ENCODE measurements at regions of chr7 and their contacts with region 1.

Region 1: DNA sequence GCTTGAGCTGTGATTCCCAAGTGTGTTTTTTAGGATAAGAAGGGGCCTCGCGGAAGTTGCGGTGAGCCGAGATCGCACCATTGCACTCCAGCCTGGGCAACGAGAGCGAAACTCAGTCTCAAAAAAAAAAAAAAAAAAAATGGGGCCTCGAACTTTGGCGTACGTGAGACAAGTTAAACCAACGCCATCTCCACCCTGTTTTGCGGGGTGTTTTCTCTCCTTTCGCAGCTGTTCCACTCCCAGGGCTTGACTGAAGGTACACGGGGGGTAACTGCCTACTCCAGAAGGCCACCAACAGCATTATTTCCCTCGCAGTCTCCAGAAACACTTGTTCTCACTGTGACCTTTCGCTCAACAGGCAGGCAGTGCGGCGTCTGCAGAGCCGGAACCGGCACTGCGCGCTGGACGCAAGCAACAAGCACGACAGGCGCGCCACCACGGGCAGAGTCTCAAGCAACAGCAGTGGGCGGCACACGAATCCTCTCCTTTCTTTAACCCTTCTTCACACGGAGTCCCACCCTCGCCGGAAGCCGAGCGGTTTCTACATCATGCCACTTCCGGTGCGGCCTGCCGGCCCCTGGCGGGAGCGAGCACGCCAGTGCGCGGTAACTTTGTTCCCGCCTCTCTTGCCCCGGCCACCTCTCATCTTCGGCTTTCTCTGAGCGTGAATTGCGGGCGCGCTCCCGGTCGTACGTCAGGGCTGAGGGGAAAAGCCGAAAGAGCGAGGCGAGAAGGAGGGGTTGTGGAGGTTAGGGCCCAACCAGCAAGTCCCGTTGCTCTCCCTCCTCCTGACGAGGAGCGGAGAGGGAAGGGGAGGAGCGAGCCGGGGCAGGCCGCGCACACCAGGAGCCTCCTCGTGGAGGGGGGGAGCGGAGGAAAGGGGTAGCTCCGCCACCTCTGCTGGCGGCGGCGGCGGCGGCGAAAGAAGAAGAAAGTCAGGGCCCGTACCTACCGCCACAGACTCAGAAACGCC is 814 bp upstream of the CDK13 start:
- DNase-seq: peak; percentile 98
- ATAC-seq: peak; percentile 91
- H3K4me3 ChIP-seq: peak overlapping the region; percentile 97 to 98
- H3K27ac ChIP-seq: peak overlapping the region; percentile 99
- H3K4me1 ChIP-seq: peaks cover 13% of the 10 kb centered on the region
- H3K27me3 ChIP-seq: no peaks in the 10 kb centered on the region
- CTCF ChIP-seq: no peak

Region 2: GRCh38 chr7:39540320-39540719 is 408.9 kb before region 1 on chr7:
- CTCF ChIA-PET with region 1: no interaction called
- POLR2A ChIA-PET with region 1: interaction called, 13 read pairs
- in situ Hi-C with region 1: no loop called
- intact Hi-C with region 1: no loop called
- DNase-seq: no peak
- ATAC-seq: no peak
- H3K4me3 ChIP-seq: no peak overlapping the region
- H3K27ac ChIP-seq: no peak overlapping the region
- H3K4me1 ChIP-seq: no peaks in the 10 kb centered on the region
- H3K27me3 ChIP-seq: no peaks in the 10 kb centered on the region
- CTCF ChIP-seq: no peak

Region 3: DNA sequence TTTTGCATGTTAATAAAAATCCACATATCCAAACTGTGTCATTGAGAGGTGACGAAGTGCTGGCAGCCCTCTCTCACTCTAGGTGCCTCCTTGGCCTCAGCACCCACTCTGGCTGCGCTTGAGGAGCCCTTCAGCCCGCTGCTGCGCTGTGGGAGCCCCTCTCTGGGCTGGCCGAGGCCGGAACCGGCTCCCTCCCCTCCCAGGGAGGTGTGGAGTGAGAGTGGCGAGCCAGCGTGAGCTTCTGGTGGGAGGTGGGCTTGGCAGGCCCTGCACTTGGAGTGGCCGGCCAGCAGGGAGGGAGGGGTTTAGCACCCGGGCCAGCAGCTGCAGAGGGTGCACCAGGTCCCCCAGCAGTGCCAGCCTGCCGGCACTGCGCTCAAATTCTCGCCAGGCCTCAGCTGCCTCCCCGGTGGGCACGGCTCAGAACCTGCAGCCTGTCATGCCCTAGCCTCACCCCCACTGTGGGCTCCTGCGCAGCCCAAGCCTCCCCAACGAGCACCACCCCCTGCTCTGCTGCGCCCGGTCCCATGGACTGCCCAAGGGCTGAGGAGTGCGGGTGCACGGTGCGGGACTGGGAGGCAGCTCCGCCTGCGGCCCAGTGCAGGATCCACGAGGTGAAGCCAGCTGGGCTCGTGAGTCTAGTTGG is 371.9 kb before region 1 on chr7:
- CTCF ChIA-PET with region 1: no interaction called
- POLR2A ChIA-PET with region 1: no interaction called
- in situ Hi-C with region 1: no loop called
- intact Hi-C with region 1: no loop called
- DNase-seq: no peak
- ATAC-seq: no peak
- H3K4me3 ChIP-seq: no peak overlapping the region
- H3K27ac ChIP-seq: no peak overlapping the region
- H3K4me1 ChIP-seq: no peaks in the 10 kb centered on the region
- H3K27me3 ChIP-seq: no peaks in the 10 kb centered on the region
- CTCF ChIP-seq: no peak

Region 4: DNA sequence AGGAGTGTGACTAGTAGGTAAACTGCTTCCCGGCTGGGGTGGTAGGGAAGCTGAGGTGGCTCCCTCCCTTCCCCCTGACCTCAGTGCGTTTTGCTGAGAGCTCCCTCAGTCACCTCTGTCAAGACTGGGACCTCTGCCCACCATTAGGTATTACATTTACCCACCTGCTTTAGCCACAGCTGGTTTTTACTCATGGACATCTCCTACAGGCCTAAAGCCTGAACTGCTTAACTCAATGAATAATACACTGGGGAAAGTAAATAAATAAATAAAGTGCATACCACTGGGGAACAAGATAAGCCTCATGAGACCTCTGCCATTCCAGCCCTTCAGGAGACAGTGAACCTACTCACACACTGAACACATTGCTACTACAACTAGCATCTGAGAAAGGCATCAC is 38.1 kb before region 1 on chr7:
- CTCF ChIA-PET with region 1: no interaction called
- POLR2A ChIA-PET with region 1: interaction called, 10 read pairs
- in situ Hi-C with region 1: no loop called
- intact Hi-C with region 1: no loop called
- DNase-seq: no peak
- ATAC-seq: 0 out of 2 replicates have a peak, but pooled peaks have one; percentile 45
- H3K4me3 ChIP-seq: no peak overlapping the region
- H3K27ac ChIP-seq: no peak overlapping the region
- H3K4me1 ChIP-seq: no peaks in the 10 kb centered on the region
- H3K27me3 ChIP-seq: no peaks in the 10 kb centered on the region; the same call in 1 of the 2 replicates
- CTCF ChIP-seq: no peak

Region 5: GRCh38 chr7:40057292-40057691 is 108.0 kb after region 1 on chr7:
- CTCF ChIA-PET with region 1: interaction called, 3 read pairs
- POLR2A ChIA-PET with region 1: no interaction called
- in situ Hi-C with region 1: no loop called
- intact Hi-C with region 1: loop called (anchors 5 kb)
- DNase-seq: no peak
- ATAC-seq: no peak
- H3K4me3 ChIP-seq: no peak overlapping the region
- H3K27ac ChIP-seq: no peak overlapping the region
- H3K4me1 ChIP-seq: no peaks in the 10 kb centered on the region
- H3K27me3 ChIP-seq: no peaks in the 10 kb centered on the region
- CTCF ChIP-seq: no peak

Measured in Panc1 (cell line).